ENCODE measurements at regions of chr2 and their contacts with region 1.

Region 1: GRCh38 chr2:62705007-62705829 is at the start of gene EHBP1:
- DNase-seq: peak; percentile 100
- H3K4me3 ChIP-seq: peak within 1 kb of the TSS; percentile 89 to 95
- H3K27ac ChIP-seq: peak within 1 kb of the TSS; percentile 92 to 93
- H3K4me1 ChIP-seq: no peaks in the 10 kb centered on the region
- H3K27me3 ChIP-seq: no peaks in the 10 kb centered on the region
- CTCF ChIP-seq: no peak
- POLR2A ChIP-seq: peak; percentile 80
- total RNA-seq, gene EHBP1: 26.5 to 30.3 TPM

Region 2: DNA sequence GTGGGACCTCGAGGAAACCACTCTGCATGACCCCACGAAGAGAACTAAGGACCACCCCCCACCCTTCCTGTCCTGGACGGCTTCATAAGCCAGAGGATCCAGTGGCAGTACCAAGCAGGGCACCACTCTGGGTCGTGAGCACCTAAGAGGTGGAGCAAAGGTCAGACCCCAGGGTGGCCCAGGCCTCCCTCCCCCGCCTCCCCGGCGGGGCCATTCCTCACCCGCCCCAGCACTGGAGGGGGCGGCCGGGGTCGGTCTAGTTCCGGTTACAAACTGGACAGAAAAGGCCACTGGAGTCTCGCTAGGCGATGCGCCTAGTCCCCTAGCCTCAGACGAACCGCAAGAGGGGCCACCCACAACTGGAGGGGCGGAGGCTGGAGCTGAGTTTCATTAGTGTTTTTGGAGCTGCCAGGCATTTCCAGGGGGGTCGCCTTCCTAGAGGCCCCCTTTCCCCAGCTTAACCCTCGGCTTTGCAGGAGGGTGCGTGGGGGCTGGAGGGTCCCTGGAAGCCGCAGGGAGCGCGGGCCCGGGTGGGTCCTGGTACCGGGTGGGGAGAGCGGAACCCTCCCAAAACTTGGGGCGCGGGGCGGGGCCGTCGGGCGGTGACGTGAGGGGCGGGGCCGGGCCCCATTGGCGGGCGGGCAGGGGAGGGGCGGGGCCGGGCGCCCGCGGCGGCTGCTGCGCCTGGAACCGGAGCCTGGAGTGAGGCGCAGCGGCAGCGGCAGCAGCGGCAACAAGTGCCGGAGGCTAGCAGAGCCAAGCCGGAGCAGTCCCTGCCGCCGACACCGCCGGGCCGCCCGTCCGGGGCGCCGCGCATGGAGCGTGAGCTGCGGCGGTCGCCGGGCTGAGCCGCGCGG is 509.6 kb before region 1 on chr2 and contains the start of gene B3GNT2:
- intact Hi-C with region 1: loop called (anchors 5 kb)
- DNase-seq: peak; percentile 80
- H3K4me3 ChIP-seq: peak within 1 kb of the TSS; percentile 95 to 98
- H3K27ac ChIP-seq: peak within 1 kb of the TSS; percentile 92 to 95
- H3K4me1 ChIP-seq: no peaks in the 10 kb centered on the region
- H3K27me3 ChIP-seq: no peaks in the 10 kb centered on the region
- CTCF ChIP-seq: no peak
- POLR2A ChIP-seq: peak; percentile 79
- total RNA-seq, gene B3GNT2: 8.5 to 18.7 TPM

Region 3: DNA sequence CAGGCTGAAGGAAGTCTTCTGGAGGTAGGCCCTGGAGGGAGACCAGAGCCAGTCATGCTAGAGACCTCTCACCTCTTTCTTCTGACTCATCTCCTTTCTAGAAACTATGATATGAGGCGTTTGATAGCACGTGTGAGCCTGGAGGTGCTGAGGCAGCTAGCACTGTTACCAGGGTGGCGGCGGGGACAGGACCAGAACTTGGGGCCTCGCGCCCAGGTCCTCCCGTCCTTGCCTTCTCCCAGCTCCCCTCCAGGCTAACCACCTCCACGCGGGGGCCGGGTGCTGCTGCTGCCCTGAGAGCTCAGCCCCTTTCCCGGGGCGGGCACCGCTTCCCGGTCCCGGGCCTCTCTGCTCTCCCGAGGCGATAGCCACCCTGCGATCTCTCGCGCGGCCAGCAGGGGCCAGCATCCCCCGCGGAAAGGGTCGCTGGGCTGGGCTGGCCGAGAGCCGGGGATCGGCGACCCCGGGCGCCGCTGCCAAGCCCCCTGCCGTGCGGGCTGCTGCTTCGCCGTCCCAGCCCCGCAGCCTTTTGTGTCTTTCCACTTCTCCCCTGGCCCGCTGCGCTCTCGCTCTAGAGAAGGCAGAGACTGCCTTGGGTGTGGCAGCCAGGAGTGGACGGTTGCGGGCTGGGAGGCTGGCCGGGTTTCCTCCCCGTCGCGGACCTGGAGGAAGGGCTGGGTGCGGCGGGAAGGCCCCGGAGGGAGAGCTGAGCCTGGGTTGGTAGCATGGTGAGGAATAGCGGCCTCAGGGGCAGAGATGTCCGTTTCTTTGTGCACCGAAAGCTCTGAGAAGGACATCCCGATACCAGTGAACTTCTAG is 248.3 kb before region 1 on chr2:
- intact Hi-C with region 1: loop called (anchors 5 kb)
- DNase-seq: peak; percentile 45
- H3K4me3 ChIP-seq: peak overlapping the region; percentile 49 to 51
- H3K27ac ChIP-seq: peak overlapping the region; percentile 65 to 67
- H3K4me1 ChIP-seq: no peaks in the 10 kb centered on the region
- H3K27me3 ChIP-seq: no peaks in the 10 kb centered on the region
- CTCF ChIP-seq: peak; percentile 90 to 97 (median 96)
- POLR2A ChIP-seq: no peak

Region 4: DNA sequence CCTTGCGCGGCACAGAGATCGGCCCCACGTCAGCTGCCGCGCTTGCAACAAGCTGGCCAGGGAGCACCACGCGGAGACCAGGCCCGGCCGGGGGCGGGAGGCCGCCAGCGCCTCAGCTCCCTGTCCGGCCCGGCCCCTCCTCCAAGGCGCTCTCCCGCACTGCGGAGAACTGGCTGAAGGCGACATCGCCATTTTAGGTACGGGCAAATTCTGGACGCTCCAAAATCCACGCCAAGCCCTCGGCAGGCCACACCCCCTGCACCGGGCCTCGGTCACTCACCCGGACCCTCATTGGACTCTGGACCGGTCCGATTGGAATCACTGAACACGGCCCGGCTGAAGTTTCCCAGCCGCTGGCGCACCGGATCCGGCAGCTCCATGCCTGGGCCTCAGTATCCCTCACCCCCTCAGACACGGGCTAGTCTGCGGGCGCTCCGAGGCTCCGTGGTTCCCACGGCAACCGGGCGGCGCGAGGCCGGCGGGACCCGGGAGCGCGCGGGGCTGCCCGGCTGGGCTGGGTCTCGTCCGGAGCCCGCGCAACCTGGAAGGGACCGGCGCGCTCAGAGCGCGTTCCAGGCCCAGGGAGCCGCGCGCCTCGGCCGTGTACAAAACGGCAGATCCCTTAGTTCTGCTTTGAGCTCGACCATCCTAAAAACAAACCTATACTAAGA is 199.3 kb before region 1 on chr2 and contains the start of gene TMEM17:
- intact Hi-C with region 1: loop called (anchors 2 kb)
- DNase-seq: peak; percentile 89
- H3K4me3 ChIP-seq: peak within 1 kb of the TSS; percentile 54 to 68
- H3K27ac ChIP-seq: peak within 1 kb of the TSS; percentile 91 to 92
- H3K4me1 ChIP-seq: no peaks in the 10 kb centered on the region
- H3K27me3 ChIP-seq: no peaks in the 10 kb centered on the region
- CTCF ChIP-seq: no peak
- POLR2A ChIP-seq: peak; percentile 43
- total RNA-seq, gene TMEM17: 2.6 to 4.0 TPM

Region 5: DNA sequence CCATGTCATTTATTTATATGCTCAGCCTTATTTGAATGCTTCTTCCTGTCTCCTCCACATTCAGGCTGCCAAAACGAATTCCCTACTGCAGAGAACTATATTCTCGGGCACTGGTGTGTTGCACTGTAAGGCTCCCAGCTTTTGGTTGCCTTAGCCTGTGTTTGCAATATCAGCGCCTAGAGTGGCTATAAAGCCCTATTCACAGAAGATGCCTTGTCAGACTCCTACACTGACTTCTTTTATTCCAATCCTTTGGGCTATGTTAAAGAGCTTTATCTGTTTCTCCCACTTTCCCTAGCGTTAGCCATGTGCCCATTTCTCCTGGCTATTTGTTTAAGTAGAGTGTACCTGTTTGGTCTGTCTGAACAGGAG is 62.1 kb before region 1 on chr2:
- intact Hi-C with region 1: loop called (anchors 2 kb)
- DNase-seq: no peak
- H3K4me3 ChIP-seq: no peak overlapping the region
- H3K27ac ChIP-seq: no peak overlapping the region
- H3K4me1 ChIP-seq: no peaks in the 10 kb centered on the region
- H3K27me3 ChIP-seq: no peaks in the 10 kb centered on the region
- CTCF ChIP-seq: no peak
- POLR2A ChIP-seq: no peak

Region 6: GRCh38 chr2:62660582-62661262 is 44.5 kb before region 1 on chr2:
- intact Hi-C with region 1: loop called (anchors 5 kb)
- DNase-seq: no peak
- H3K4me3 ChIP-seq: no peak overlapping the region
- H3K27ac ChIP-seq: no peak overlapping the region
- H3K4me1 ChIP-seq: no peaks in the 10 kb centered on the region
- H3K27me3 ChIP-seq: no peaks in the 10 kb centered on the region
- CTCF ChIP-seq: no peak
- POLR2A ChIP-seq: no peak

Region 7: GRCh38 chr2:62774555-62775366 is 69.5 kb after region 1 on chr2:
- intact Hi-C with region 1: loop called (anchors 5 kb)
- DNase-seq: peak; percentile 29
- H3K4me3 ChIP-seq: no peak overlapping the region
- H3K27ac ChIP-seq: no peak overlapping the region
- H3K4me1 ChIP-seq: no peaks in the 10 kb centered on the region
- H3K27me3 ChIP-seq: no peaks in the 10 kb centered on the region
- CTCF ChIP-seq: peak; percentile 52 to 85 (median 81)
- POLR2A ChIP-seq: no peak

Region 8: GRCh38 chr2:63522950-63523349 is 817.7 kb after region 1 on chr2:
- intact Hi-C with region 1: no loop called
- DNase-seq: no peak
- H3K4me3 ChIP-seq: no peak overlapping the region
- H3K27ac ChIP-seq: no peak overlapping the region
- H3K4me1 ChIP-seq: no peaks in the 10 kb centered on the region
- H3K27me3 ChIP-seq: no peaks in the 10 kb centered on the region
- CTCF ChIP-seq: no peak
- POLR2A ChIP-seq: no peak